ENCODE measurements at regions of chr15 and their contacts with region 1.

Region 1: GRCh38 chr15:67254238-67255175 is at the starts of genes AAGAB and IQCH:
- DNase-seq: peak; percentile 96 to 97
- ATAC-seq: peak; percentile 92 to 99 (median 95)
- H3K4me3 ChIP-seq: peak within 1 kb of the TSS; percentile 89
- H3K4me3 Mint-ChIP-seq: peak within 1 kb of the TSS; percentile 99
- H3K27ac ChIP-seq: peak within 1 kb of the TSS; percentile 87
- H3K27ac Mint-ChIP-seq: peak within 1 kb of the TSS; percentile 95 to 98
- H3K4me1 ChIP-seq: peaks cover 15% of the 10 kb centered on the region
- H3K4me1 Mint-ChIP-seq: peaks cover 39 to 41% of the 10 kb centered on the region in 2 donors
- H3K27me3 ChIP-seq: no peaks in the 10 kb centered on the region
- H3K27me3 Mint-ChIP-seq: peaks cover 3 to 10% of the 10 kb centered on the region in 2 donors
- CTCF ChIP-seq: no peak
- total RNA-seq, gene AAGAB: 41.1 to 44.3 (median 42.5) TPM
- total RNA-seq, gene IQCH: 0.78 to 1.4 (median 0.86) TPM

Region 2: DNA sequence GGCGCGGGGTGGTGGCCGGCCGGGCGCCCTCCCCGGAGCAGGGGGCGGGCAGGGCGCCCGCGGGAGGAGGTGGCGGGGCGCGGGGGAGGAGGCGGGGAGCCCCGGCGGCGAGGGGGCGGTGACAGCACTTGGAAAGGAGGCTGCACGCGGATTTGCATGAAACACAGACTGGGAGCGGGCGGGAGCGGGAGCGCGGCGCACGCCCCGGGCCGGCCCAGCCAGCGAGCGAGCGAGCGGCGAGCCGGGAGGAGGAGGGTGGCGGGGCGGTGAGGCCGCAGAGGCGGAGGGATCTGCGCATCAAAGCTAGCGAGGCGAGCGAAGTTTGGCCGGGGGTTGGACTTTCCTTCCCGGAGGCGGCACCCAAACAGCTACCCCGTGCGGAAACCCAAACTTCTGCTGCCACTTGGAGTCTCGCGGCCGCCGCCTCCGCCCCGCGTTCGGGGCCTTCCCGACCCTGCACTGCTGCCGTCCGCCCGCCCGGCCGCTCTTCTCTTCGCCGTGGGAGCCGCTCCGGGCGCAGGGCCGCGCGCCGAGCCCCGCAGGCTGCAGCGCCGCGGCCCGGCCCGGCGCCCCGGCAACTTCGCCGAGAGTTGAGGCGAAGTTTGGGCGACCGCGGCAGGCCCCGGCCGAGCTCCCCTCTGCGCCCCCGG is 188.9 kb before region 1 on chr15 and contains the start of gene SMAD3:
- intact Hi-C with region 1: loop called (anchors 2 kb)
- DNase-seq: peak; percentile 64 to 87
- ATAC-seq: peak; percentile 52 to 75 (median 69)
- H3K4me3 ChIP-seq: peak within 1 kb of the TSS; percentile 89
- H3K4me3 Mint-ChIP-seq: peak within 1 kb of the TSS; percentile 93
- H3K27ac ChIP-seq: peak within 1 kb of the TSS; percentile 63
- H3K27ac Mint-ChIP-seq: peak within 1 kb of the TSS; percentile 61 to 92
- H3K4me1 ChIP-seq: peaks cover 50% of the 10 kb centered on the region
- H3K4me1 Mint-ChIP-seq: peaks cover 46 to 50% of the 10 kb centered on the region in 2 donors
- H3K27me3 ChIP-seq: no peaks in the 10 kb centered on the region
- H3K27me3 Mint-ChIP-seq: no peaks in the 10 kb centered on the region
- CTCF ChIP-seq: no peak
- total RNA-seq, gene SMAD3: 47.1 to 72.6 (median 63.0) TPM

Region 3: DNA sequence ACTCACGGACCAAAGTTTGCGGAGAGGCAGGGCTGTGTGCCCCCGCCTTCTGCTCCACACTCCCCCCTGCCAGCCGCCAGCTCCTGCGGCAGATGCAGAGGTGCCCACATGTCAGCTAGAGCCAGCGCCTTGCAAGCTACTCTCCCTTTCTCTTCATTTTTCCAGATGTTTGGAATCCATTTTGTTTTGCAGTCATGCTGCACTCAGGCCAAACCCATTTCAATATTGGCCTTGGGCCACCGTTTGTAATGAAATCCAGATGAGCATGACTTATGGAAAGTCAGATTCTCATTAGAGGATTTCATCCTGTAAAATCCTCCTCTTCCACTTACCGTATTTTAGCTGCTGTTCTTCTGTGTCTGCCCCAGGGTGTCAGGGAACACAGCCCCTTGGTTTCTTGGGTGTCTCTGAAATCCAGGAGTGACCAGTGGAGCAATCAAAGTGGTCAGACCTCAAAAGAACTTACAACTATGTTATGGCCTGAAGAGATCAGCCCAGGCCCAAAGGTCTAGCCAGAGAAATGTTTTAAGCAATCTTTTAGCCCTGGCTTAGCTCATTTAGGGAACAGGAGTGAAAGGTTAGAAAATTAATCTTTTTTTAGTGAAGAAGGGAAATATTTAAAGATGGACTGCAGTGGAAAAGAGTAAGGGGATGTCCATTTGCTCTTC is 65.8 kb before region 1 on chr15:
- intact Hi-C with region 1: no loop called
- DNase-seq: no peak
- ATAC-seq: no peak
- H3K4me3 ChIP-seq: no peak overlapping the region
- H3K4me3 Mint-ChIP-seq: no peak overlapping the region
- H3K27ac ChIP-seq: no peak overlapping the region
- H3K27ac Mint-ChIP-seq: peak overlapping the region in 1 of 2 donors; percentile 52
- H3K4me1 ChIP-seq: peaks cover 21% of the 10 kb centered on the region
- H3K4me1 Mint-ChIP-seq: peaks cover 25 to 33% of the 10 kb centered on the region in 2 donors
- H3K27me3 ChIP-seq: no peaks in the 10 kb centered on the region
- H3K27me3 Mint-ChIP-seq: no peaks in the 10 kb centered on the region
- CTCF ChIP-seq: no peak

Region 4: GRCh38 chr15:68285259-68285980 is 1030.9 kb after region 1 on chr15:
- intact Hi-C with region 1: loop called (anchors 10 kb)
- DNase-seq: no peak
- ATAC-seq: no peak
- H3K4me3 ChIP-seq: no peak overlapping the region
- H3K4me3 Mint-ChIP-seq: no peak overlapping the region
- H3K27ac ChIP-seq: no peak overlapping the region
- H3K27ac Mint-ChIP-seq: peak overlapping the region; percentile 32 to 52
- H3K4me1 ChIP-seq: peaks cover 10% of the 10 kb centered on the region
- H3K4me1 Mint-ChIP-seq: peaks cover 59 to 67% of the 10 kb centered on the region in 2 donors
- H3K27me3 ChIP-seq: no peaks in the 10 kb centered on the region
- H3K27me3 Mint-ChIP-seq: no peaks in the 10 kb centered on the region
- CTCF ChIP-seq: no peak

Measured in natural killer cell (primary cell).